ENCODE measurements at regions of chr15 and their contacts with region 1.

Region 1: GRCh38 chr15:32663671-32664070 is 22.2 kb downstream of the SCG5 start:
- DNase-seq: no peak
- H3K4me3 Mint-ChIP-seq: no peak overlapping the region
- H3K27ac Mint-ChIP-seq: no peak overlapping the region
- H3K4me1 Mint-ChIP-seq: peaks cover 2% of the 10 kb centered on the region
- H3K27me3 Mint-ChIP-seq: no peaks in the 10 kb centered on the region

Region 2: GRCh38 chr15:32651229-32651837 is 12.3 kb before region 1 on chr15:
- CTCF ChIA-PET with region 1: interaction called, 13 read pairs
- POLR2A ChIA-PET with region 1: interaction called, 3 read pairs
- DNase-seq: peak; percentile 55
- H3K4me3 Mint-ChIP-seq: no peak overlapping the region
- H3K27ac Mint-ChIP-seq: no peak overlapping the region
- H3K4me1 Mint-ChIP-seq: peaks cover 7% of the 10 kb centered on the region
- H3K27me3 Mint-ChIP-seq: no peaks in the 10 kb centered on the region